IMR-90 (cell line): ENCODE measurements at regions of chr5 and their contacts with region 1.

Region 1: DNA sequence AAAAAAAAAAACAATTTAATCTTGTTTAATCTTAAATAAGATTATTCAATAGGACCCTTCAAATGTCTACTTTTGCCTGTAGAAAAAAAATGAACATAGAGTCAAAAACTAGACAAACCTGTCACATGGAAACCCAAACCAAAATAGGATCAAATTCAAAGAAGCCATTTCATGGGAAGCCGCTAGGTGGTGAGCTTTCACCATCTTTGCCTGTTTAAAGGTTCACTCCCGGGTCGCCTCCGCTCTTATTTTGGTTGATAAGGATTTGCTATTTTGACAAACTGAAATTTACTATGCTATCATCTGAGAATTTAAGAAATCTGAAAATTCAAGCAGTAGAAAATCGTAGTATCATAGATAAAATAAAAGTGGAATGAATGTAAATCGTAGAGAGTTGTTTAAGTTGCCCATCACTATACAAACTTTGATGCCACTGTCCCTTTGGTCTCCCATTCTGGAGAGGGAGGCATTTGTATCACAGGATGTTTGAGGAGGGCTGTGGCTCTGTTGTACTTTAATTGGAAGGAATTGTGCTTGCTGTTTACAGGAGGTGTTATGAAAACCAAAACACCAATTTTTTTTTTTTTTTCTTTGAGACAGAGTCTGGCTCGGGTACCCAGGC is 43.5 kb upstream of the DNAH5 start:
- DNase-seq: peak; percentile 81
- ATAC-seq: peak; percentile 54
- H3K4me3 ChIP-seq: no peak overlapping the region
- H3K27ac ChIP-seq: peak overlapping the region; percentile 81
- H3K4me1 ChIP-seq: peaks cover 21% of the 10 kb centered on the region
- H3K27me3 ChIP-seq: no peaks in the 10 kb centered on the region
- CTCF ChIP-seq: peak; percentile 89
- POLR2A ChIP-seq: peak; percentile 51; the same call in 1 of the 2 replicates
- RAD21 ChIP-seq: peak; percentile 95

Region 2: DNA sequence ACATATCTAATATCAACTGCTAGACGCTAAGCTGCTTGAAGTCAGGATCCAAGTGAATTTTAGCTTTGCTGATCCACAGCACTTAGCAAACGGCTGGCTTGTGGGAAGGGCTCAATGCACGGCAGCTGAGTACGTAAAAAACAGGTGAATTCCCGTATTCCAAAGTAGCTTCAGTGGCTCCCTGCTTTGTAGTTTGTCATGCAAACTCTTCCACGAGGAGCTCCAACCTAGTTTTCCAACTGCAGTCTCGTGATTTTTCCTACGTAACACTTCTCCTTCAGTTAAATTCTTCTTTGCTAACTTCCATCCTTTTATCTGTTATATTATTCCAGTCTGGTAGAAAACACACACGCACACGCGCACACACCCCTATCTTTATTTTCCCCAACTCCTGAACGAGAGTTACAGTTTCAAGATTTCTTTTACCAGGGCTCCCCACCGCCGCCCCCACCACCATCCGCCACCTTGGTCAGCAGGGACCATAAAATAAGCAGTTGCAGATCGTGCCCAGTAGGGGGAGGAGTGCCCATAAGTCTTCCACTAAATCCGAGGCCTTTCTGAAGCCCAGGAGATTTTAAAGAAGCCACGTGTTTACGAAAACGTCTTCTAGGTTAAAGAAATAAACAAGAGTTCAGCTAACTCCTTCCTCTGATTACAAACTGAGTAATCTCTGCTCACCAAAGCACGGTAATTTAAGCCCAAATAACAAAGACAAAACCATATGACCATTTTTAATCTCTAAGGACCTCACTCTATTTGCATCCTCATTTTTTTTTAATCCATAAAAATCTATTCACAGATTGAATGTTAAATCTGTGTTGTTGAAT is 120.4 kb after region 1 on chr5:
- CTCF ChIA-PET with region 1: interaction called, 3 read pairs
- POLR2A ChIA-PET with region 1: no interaction called
- dilution Hi-C with region 1: no loop called
- in situ Hi-C with region 1: no loop called
- intact Hi-C with region 1: loop called (anchors 2 kb)
- DNase-seq: peak; percentile 91
- ATAC-seq: peak; percentile 83
- H3K4me3 ChIP-seq: no peak overlapping the region
- H3K27ac ChIP-seq: peak overlapping the region; percentile 54
- H3K4me1 ChIP-seq: peaks cover 9% of the 10 kb centered on the region
- H3K27me3 ChIP-seq: no peaks in the 10 kb centered on the region
- CTCF ChIP-seq: peak; percentile 72
- POLR2A ChIP-seq: no peak
- RAD21 ChIP-seq: peak; percentile 72

Region 3: GRCh38 chr5:14190194-14191164 is 202.5 kb after region 1 on chr5:
- CTCF ChIA-PET with region 1: no interaction called
- POLR2A ChIA-PET with region 1: no interaction called
- dilution Hi-C with region 1: no loop called
- in situ Hi-C with region 1: no loop called
- intact Hi-C with region 1: loop called (anchors 5 kb)
- DNase-seq: peak; percentile 99
- ATAC-seq: peak; percentile 83
- H3K4me3 ChIP-seq: no peak overlapping the region
- H3K27ac ChIP-seq: peak overlapping the region; percentile 99
- H3K4me1 ChIP-seq: peaks cover 29% of the 10 kb centered on the region
- H3K27me3 ChIP-seq: no peaks in the 10 kb centered on the region
- CTCF ChIP-seq: no peak
- POLR2A ChIP-seq: peak; percentile 51; the same call in 1 of the 2 replicates
- RAD21 ChIP-seq: peak; percentile 25

Region 4: DNA sequence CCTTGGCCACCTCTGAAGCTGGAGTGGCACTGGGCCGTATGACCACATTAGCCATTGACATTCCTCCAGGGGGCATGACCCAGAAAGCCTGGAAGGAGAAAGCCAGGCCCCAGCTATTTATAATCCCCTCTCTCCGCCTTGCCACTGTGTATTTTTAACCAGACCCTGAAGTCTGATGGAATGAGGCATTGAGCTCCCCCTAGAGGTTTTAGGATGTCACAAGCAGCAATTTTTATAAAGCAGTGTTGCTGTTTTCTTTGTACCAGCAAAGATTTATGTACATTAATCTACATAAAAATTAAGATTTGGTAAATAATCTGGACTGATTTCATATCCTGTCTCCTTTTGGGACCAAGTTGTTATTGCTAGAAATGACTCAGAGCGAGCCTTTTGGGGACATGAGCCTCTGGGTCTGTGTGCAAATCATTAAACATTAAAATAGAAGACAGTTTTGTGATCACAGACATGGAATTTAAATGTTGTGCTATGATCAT is 282.3 kb after region 1 on chr5:
- CTCF ChIA-PET with region 1: interaction called, 4 read pairs
- POLR2A ChIA-PET with region 1: no interaction called
- dilution Hi-C with region 1: no loop called
- in situ Hi-C with region 1: no loop called
- intact Hi-C with region 1: loop called (anchors 1 kb)
- DNase-seq: peak; percentile 64
- ATAC-seq: peak; percentile 52
- H3K4me3 ChIP-seq: no peak overlapping the region
- H3K27ac ChIP-seq: peak overlapping the region; percentile 89
- H3K4me1 ChIP-seq: peaks cover 34% of the 10 kb centered on the region
- H3K27me3 ChIP-seq: no peaks in the 10 kb centered on the region
- CTCF ChIP-seq: peak; percentile 76
- POLR2A ChIP-seq: no peak
- RAD21 ChIP-seq: peak; percentile 71

Region 5: GRCh38 chr5:14644623-14645237 is 656.8 kb after region 1 on chr5:
- CTCF ChIA-PET with region 1: interaction called, 4 read pairs
- POLR2A ChIA-PET with region 1: no interaction called
- dilution Hi-C with region 1: no loop called
- in situ Hi-C with region 1: no loop called
- intact Hi-C with region 1: loop called (anchors 5 kb)
- DNase-seq: no peak
- ATAC-seq: no peak
- H3K4me3 ChIP-seq: no peak overlapping the region
- H3K27ac ChIP-seq: no peak overlapping the region
- H3K4me1 ChIP-seq: no peaks in the 10 kb centered on the region
- H3K27me3 ChIP-seq: peaks cover 26% of the 10 kb centered on the region
- CTCF ChIP-seq: no peak
- POLR2A ChIP-seq: no peak
- RAD21 ChIP-seq: no peak